ENCODE measurements at regions of chr11 and their contacts with region 1.

Region 1: GRCh38 chr11:33829433-33830141 is 55.3 kb upstream of the FBXO3 start:
- DNase-seq: peak; percentile 59 to 65
- H3K4me3 ChIP-seq: peak overlapping the region; percentile 0; the same call in 1 of the 2 replicates
- H3K4me3 Mint-ChIP-seq: peak overlapping the region; percentile 62
- H3K27ac Mint-ChIP-seq: no peak overlapping the region
- H3K4me1 ChIP-seq: peaks cover 7% of the 10 kb centered on the region; the same call in 1 of the 2 replicates
- H3K4me1 Mint-ChIP-seq: no peaks in the 10 kb centered on the region
- H3K27me3 ChIP-seq: peaks cover 2% of the 10 kb centered on the region
- H3K27me3 Mint-ChIP-seq: peaks cover 17% of the 10 kb centered on the region
- CTCF ChIP-seq: peak; percentile 73 to 77

Region 2: DNA sequence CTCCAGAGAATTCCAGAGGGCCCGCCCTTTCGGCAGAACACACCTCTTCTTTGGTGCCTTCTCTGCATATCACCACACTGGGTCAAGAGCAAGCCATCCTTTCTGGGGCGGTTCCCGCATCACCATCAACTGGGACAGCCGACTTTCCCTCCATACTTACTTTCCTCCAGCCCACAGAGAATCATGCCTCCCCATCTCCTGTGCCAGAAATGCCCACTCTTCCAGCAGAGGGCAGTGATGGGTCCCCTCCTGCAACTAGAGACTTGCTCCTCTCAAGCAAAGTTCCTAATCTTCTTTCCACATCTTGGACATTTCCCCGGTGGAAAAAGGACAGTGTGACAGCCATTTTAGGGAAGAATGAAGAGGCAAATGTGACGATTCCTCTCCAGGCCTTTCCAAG is 286.7 kb before region 1 on chr11:
- CTCF ChIA-PET with region 1: no interaction called
- POLR2A ChIA-PET with region 1: no interaction called
- intact Hi-C with region 1: loop called (anchors 2 kb)
- DNase-seq: peak; percentile 61
- H3K4me3 ChIP-seq: no peak overlapping the region
- H3K4me3 Mint-ChIP-seq: no peak overlapping the region
- H3K27ac Mint-ChIP-seq: no peak overlapping the region
- H3K4me1 ChIP-seq: no peaks in the 10 kb centered on the region
- H3K4me1 Mint-ChIP-seq: peaks cover 4% of the 10 kb centered on the region
- H3K27me3 ChIP-seq: no peaks in the 10 kb centered on the region
- H3K27me3 Mint-ChIP-seq: peaks cover 25% of the 10 kb centered on the region
- CTCF ChIP-seq: peak; percentile 44 to 81

Region 3: DNA sequence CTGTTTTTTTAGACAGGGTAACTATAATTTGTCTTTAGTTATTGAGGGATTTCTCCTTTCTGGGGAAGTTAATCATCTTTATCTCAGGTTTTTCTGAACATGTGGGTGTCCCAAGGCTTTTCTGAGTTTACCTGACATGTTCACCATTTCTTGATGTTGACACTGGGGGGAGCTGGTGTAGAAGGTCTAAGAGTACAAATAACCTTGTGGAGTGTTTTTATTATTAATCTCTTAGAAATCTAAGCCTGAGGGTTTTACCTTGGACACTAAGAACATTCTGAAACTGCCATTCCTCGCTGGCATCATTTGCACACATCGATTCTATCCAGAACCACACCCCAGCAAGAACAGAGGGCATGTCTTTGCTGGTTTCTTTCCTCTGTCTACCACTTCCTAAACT is 113.4 kb before region 1 on chr11:
- CTCF ChIA-PET with region 1: no interaction called
- POLR2A ChIA-PET with region 1: no interaction called
- intact Hi-C with region 1: loop called (anchors 1 kb)
- DNase-seq: no peak
- H3K4me3 ChIP-seq: no peak overlapping the region
- H3K4me3 Mint-ChIP-seq: no peak overlapping the region
- H3K27ac Mint-ChIP-seq: no peak overlapping the region
- H3K4me1 ChIP-seq: no peaks in the 10 kb centered on the region
- H3K4me1 Mint-ChIP-seq: peaks cover 6% of the 10 kb centered on the region
- H3K27me3 ChIP-seq: no peaks in the 10 kb centered on the region
- H3K27me3 Mint-ChIP-seq: no peaks in the 10 kb centered on the region
- CTCF ChIP-seq: peak in 1 of 2 experiments; percentile 38

Region 4: GRCh38 chr11:33773987-33774735 is 55.4 kb before region 1 on chr11 and contains the start of gene FBXO3:
- CTCF ChIA-PET with region 1: no interaction called
- POLR2A ChIA-PET with region 1: no interaction called
- intact Hi-C with region 1: loop called (anchors 2 kb)
- DNase-seq: peak; percentile 89 to 92
- H3K4me3 ChIP-seq: peak within 1 kb of the TSS; percentile 66
- H3K4me3 Mint-ChIP-seq: peak within 1 kb of the TSS; percentile 85
- H3K27ac Mint-ChIP-seq: peak within 1 kb of the TSS; percentile 82
- H3K4me1 ChIP-seq: peaks cover 11% of the 10 kb centered on the region
- H3K4me1 Mint-ChIP-seq: peaks cover 24% of the 10 kb centered on the region
- H3K27me3 ChIP-seq: no peaks in the 10 kb centered on the region
- H3K27me3 Mint-ChIP-seq: peaks cover 10% of the 10 kb centered on the region
- CTCF ChIP-seq: no peak
- total RNA-seq, gene FBXO3: 27.4 and 29.6 TPM in 2 replicates

Region 5: DNA sequence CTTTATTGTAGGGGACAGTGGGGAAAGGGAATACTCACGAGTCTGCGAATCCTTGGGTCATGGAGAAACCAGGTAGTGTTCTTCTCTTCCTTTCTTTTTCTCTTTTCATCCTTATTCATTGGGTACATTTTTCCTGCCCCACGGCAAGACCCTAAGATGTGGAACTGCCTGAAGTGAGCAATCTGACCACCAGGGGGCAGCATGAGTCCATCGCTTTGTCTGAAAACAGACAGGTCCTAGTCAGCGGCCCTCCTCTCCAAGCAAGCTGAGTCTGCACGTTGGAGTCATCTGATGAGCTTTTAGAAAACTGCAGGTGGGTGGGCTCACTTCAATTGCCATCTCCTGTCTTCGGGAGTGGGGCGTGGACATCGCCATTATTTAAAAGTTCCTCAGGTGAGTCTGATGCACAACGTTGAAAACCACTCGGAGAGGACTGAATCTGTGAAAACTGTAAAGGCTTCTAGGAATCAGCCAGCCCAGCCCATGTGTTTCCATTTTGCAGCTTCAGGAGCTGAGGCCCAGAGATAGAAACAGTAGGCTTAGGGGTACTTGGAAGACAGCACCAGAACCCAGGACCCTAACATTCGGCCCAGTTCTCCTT is 21.3 kb before region 1 on chr11:
- CTCF ChIA-PET with region 1: interaction called, 24 read pairs
- POLR2A ChIA-PET with region 1: no interaction called
- intact Hi-C with region 1: loop called (anchors 1 kb)
- DNase-seq: peak; percentile 83 to 90
- H3K4me3 ChIP-seq: no peak overlapping the region
- H3K4me3 Mint-ChIP-seq: no peak overlapping the region
- H3K27ac Mint-ChIP-seq: no peak overlapping the region
- H3K4me1 ChIP-seq: no peaks in the 10 kb centered on the region
- H3K4me1 Mint-ChIP-seq: no peaks in the 10 kb centered on the region
- H3K27me3 ChIP-seq: no peaks in the 10 kb centered on the region
- H3K27me3 Mint-ChIP-seq: peaks cover 24% of the 10 kb centered on the region
- CTCF ChIP-seq: peak; percentile 94 to 95

Measured in Caco-2 (cell line).